Endothelial cell of umbilical vein (primary cell): ENCODE measurements at regions of chr2 and their contacts with region 1.

Region 1: DNA sequence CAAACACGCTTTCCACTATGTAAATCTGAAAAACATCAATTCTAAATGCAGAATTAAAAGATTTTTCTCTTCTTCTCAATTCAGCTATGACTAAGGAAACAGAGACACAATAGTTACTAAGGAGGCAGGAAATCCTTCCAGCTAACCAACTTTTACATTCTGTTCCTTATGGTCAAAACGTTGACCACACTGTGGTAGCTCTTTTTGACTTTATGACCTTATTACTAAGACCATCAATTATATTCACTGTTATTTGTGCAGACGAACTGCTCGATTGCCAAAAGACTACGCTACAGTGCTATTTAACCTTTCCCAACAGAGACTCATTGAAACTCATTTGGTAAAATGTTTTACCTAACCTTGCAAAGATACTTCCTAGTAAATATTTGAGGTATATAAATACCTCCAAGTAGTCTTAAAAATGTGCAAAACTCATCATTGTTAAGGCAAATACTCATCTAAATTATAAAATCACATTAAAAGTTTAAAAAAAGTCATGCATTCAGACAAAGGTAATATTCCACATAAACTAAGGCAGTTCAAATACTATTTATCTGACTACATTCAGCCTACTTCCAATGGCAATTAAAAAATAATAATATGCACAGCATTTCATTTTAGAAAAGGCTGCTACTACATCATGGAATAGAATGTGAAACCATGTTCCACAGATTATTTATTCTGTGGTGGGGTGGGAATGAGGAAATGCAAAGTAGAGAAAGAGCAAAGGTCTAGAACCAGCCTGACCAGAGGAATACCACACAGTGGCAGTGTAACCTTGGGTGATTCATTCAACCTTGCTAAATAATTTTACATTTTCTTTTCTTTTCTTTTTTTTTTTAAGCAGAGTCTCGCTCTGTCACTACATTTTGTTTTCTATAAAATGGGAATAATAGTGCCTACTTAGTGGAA is 139.9 kb downstream of the THADA start:
- DNase-seq: peak; percentile 88
- H3K4me3 ChIP-seq: peak overlapping the region in 1 of 3 experiments; percentile 28
- H3K27ac ChIP-seq: peak overlapping the region; percentile 90
- H3K4me1 ChIP-seq: peaks cover 86% of the 10 kb centered on the region
- H3K27me3 ChIP-seq: no peaks in the 10 kb centered on the region
- CTCF ChIP-seq: no peak
- POLR2A ChIP-seq: no peak

Region 2: DNA sequence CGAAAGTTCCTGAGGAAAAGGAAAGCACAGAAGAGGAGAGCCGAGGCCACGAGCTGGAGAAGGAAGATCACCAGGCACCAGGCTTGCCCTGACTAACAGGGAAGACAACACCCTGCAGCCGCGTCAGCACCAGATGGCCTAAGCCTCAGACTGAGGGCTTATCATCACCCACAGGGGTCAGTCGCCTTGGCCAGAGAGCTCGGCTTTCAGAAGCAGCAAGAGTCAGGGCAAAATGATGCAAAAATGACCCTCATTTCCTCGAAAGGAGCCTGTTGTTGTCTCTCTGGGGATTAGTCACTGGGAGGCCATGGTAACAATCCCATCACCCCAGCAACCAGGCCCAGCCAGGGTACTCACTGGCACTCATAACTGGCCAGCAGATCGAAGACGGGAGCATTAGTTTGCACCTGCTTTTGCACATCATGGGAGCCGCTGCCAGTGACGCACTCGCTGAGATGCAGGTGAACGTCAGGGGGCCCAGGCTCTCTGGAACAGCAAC is 186.9 kb before region 1 on chr2:
- CTCF ChIA-PET with region 1: interaction called, 5 read pairs
- POLR2A ChIA-PET with region 1: no interaction called
- dilution Hi-C with region 1: no loop called
- intact Hi-C with region 1: loop called (anchors 1 kb)
- DNase-seq: peak; percentile 98
- H3K4me3 ChIP-seq: no peak overlapping the region
- H3K27ac ChIP-seq: peak overlapping the region; percentile 84
- H3K4me1 ChIP-seq: peaks cover 16% of the 10 kb centered on the region
- H3K27me3 ChIP-seq: no peaks in the 10 kb centered on the region
- CTCF ChIP-seq: peak; percentile 5 to 35
- POLR2A ChIP-seq: peak; percentile 42

Region 3: DNA sequence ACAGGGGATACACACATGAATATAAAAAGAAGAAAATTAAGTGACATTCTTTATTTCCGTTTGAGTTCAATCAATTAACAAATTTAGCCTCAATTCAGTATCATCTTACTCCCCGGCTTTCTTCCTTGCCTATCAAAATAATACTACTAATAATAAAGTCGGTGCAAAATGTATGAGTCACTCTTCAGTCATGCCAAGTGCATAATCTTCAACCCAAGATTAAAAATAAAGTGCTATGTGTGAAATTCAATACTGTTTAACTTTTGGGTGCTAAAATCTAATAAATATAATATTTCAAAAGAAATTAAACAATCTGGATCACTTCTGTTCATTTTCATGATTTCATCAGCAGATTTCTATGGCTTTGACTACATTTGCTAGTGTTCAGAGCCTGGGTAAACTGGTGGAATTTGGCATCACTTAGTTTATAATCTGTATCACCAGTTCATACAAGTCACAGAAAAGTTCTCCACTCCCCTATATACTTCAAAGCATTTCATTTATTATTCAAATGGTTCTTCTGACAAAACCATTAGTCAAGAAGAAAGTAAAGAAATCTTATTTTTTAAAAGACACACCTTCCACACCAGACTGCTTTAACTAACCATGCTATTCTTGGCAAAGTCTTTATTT is 43.8 kb before region 1 on chr2:
- CTCF ChIA-PET with region 1: no interaction called
- POLR2A ChIA-PET with region 1: no interaction called
- dilution Hi-C with region 1: no loop called
- intact Hi-C with region 1: loop called (anchors 5 kb)
- DNase-seq: peak; percentile 74
- H3K4me3 ChIP-seq: no peak overlapping the region
- H3K27ac ChIP-seq: no peak overlapping the region
- H3K4me1 ChIP-seq: peaks cover 22% of the 10 kb centered on the region
- H3K27me3 ChIP-seq: no peaks in the 10 kb centered on the region
- CTCF ChIP-seq: no peak
- POLR2A ChIP-seq: no peak

Region 4: DNA sequence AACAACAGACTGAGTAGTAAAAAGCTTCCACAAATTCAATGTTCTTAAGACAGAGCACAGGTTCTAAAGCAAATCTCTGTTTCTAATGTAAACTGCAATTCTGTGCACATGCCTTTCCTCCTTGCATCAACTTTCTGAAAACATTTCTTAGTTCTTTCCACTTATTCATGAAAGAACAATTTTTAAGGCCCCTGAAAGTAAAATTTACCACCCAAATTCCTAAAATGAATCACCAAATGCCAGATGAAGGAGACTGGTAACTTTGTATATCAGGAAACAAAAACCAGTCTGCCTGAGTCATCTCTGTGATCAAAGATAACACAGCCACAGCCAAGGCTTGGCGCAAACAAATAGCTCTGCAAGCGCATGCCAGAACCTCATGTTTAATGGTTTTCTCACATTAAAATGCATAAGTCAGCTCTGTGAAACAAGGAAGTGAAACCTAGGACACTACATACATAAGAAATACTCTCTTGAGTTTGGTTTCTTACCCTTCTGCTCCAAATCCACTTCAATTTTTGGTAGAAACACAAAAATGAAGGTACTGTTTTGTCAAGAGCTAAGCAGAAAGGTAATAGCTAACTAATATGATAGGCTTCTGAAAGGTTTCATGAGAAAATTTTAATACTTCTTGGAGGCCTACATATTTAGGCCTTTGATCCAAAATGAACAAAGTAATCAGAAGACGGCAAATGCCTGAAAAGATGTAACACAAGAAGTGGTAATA is 29.5 kb before region 1 on chr2:
- CTCF ChIA-PET with region 1: interaction called, 7 read pairs
- POLR2A ChIA-PET with region 1: no interaction called
- dilution Hi-C with region 1: no loop called
- intact Hi-C with region 1: loop called (anchors 1 kb)
- DNase-seq: peak; percentile 97
- H3K4me3 ChIP-seq: no peak overlapping the region
- H3K27ac ChIP-seq: peak overlapping the region; percentile 65
- H3K4me1 ChIP-seq: peaks cover 17% of the 10 kb centered on the region
- H3K27me3 ChIP-seq: no peaks in the 10 kb centered on the region
- CTCF ChIP-seq: no peak
- POLR2A ChIP-seq: peak; percentile 23

Region 5: DNA sequence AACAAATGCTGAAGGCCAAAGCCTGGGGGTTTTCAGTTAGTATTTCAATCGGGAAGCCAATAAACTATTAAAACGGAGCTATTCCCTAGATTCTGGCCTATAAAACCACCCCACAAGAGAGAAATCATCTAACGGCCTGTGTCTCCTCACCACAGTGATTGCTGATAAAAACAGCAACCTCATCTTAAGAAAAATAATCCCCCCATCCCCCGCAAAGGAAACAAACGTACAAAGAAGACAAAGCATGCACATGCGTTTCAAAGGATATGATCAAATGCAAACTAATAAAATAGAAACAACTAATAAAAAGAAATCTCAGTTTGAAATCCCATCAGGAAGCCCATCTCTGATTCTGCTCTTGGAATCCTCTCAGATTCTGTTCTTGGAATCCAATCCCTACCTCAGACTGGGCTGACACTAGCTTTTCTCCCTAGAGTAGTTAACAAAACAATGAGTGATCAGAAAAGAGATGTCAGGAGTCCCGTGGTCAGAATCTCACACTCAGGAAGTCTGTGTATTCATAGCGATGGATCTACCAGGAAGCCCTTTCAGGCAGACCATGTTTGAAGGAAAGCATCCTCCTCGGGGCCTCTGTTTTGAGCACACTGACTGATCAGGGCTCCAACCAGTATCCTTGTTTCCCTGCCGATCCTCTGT is 10.9 kb before region 1 on chr2:
- CTCF ChIA-PET with region 1: interaction called, 13 read pairs
- POLR2A ChIA-PET with region 1: no interaction called
- dilution Hi-C with region 1: no loop called
- intact Hi-C with region 1: loop called (anchors 2 kb)
- DNase-seq: peak; percentile 56
- H3K4me3 ChIP-seq: no peak overlapping the region
- H3K27ac ChIP-seq: peak overlapping the region; percentile 2
- H3K4me1 ChIP-seq: peaks cover 14% of the 10 kb centered on the region
- H3K27me3 ChIP-seq: no peaks in the 10 kb centered on the region
- CTCF ChIP-seq: no peak
- POLR2A ChIP-seq: no peak

Region 6: DNA sequence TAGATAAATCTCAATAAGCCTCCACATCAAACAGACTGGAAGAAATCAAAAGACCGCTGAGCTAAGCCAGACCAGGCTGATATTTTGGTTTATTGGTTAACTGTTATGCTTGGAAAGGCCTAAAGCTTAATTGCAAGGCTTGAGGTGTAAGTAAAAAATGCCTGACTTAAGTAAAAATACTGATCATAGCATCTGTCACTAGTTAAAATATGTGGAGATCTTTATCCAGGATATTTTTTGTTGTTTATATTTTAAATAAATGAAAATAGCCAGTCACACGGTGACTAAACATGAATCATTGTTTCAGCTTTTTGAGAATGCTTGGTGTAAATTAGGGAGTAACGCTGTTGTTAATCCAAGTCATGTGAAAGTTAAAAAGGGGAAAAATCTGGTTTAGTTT is 11.9 kb after region 1 on chr2:
- CTCF ChIA-PET with region 1: interaction called, 23 read pairs
- POLR2A ChIA-PET with region 1: no interaction called
- dilution Hi-C with region 1: no loop called
- intact Hi-C with region 1: loop called (anchors 1 kb)
- DNase-seq: peak; percentile 78
- H3K4me3 ChIP-seq: no peak overlapping the region
- H3K27ac ChIP-seq: peak overlapping the region; percentile 83
- H3K4me1 ChIP-seq: peaks cover 26% of the 10 kb centered on the region
- H3K27me3 ChIP-seq: no peaks in the 10 kb centered on the region
- CTCF ChIP-seq: no peak
- POLR2A ChIP-seq: no peak